ENCODE measurements at regions of chr9 and their contacts with region 1.

Region 1: GRCh38 chr9:4984621-4985385 is at the start of gene JAK2:
- DNase-seq: peak; percentile 91
- H3K4me3 Mint-ChIP-seq: no peak within 1 kb of the TSS
- H3K27ac Mint-ChIP-seq: peak within 1 kb of the TSS; percentile 96
- H3K4me1 Mint-ChIP-seq: peaks cover 45% of the 10 kb centered on the region
- H3K27me3 Mint-ChIP-seq: no peaks in the 10 kb centered on the region
- total RNA-seq, gene JAK2: 29.4 and 32.3 TPM in 2 replicates

Region 2: DNA sequence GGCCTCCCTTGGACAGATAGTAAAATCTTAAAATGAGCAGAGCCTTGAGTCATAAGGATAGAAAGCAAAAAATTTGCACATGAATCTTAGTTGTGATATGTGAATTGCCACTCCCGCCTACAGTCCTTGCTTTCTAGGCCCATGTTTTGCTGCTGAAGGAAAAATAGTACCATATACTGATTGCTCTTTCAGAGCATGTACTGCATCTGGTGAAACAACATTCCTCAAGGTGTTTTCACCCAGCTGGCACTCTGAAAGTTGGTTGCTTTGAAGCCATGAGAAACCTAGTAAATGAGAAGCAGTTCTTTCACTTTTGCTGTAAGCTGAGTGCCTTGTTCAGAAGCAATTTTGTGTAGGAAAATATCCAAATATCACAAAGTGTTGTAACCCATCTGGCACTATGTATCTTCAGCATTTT is 295.1 kb before region 1 on chr9:
- intact Hi-C with region 1: loop called (anchors 5 kb)
- DNase-seq: no peak
- H3K4me3 Mint-ChIP-seq: no peak overlapping the region
- H3K27ac Mint-ChIP-seq: peak overlapping the region; percentile 57
- H3K4me1 Mint-ChIP-seq: peaks cover 25% of the 10 kb centered on the region
- H3K27me3 Mint-ChIP-seq: no peaks in the 10 kb centered on the region

Region 3: GRCh38 chr9:4792572-4793458 is 192.0 kb before region 1 on chr9 and contains the start of gene RCL1:
- intact Hi-C with region 1: loop called (anchors 1 kb)
- DNase-seq: peak; percentile 97
- H3K4me3 Mint-ChIP-seq: peak within 1 kb of the TSS; percentile 93
- H3K27ac Mint-ChIP-seq: peak within 1 kb of the TSS; percentile 90
- H3K4me1 Mint-ChIP-seq: peaks cover 40% of the 10 kb centered on the region
- H3K27me3 Mint-ChIP-seq: peaks cover 2% of the 10 kb centered on the region
- total RNA-seq, gene RCL1: 34.5 and 36.3 TPM in 2 replicates

Region 4: DNA sequence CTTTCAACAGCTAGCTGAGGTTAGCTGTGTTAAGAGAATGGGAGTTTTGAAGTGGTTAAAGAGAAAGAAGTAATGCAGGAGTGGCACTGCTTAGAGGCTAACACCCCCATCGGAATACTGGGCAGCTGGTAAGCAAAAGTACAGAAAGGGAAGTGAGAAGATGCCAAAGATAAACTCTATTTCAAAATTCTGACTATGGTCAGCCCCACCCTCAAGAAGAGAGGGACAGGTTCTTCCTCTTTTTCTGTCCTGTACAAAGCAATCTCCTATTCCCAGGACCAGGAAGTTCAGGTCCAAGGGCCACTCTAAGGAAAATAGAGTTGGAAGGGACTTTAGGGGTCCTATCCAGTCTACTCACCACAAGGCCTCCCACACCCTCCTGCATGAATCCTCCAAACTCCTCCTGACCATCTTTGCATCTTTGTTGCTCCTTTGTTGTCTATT is 45.7 kb before region 1 on chr9:
- intact Hi-C with region 1: loop called (anchors 1 kb)
- DNase-seq: peak; percentile 39
- H3K4me3 Mint-ChIP-seq: peak overlapping the region; percentile 14
- H3K27ac Mint-ChIP-seq: peak overlapping the region; percentile 90
- H3K4me1 Mint-ChIP-seq: peaks cover 65% of the 10 kb centered on the region
- H3K27me3 Mint-ChIP-seq: no peaks in the 10 kb centered on the region

Region 5: DNA sequence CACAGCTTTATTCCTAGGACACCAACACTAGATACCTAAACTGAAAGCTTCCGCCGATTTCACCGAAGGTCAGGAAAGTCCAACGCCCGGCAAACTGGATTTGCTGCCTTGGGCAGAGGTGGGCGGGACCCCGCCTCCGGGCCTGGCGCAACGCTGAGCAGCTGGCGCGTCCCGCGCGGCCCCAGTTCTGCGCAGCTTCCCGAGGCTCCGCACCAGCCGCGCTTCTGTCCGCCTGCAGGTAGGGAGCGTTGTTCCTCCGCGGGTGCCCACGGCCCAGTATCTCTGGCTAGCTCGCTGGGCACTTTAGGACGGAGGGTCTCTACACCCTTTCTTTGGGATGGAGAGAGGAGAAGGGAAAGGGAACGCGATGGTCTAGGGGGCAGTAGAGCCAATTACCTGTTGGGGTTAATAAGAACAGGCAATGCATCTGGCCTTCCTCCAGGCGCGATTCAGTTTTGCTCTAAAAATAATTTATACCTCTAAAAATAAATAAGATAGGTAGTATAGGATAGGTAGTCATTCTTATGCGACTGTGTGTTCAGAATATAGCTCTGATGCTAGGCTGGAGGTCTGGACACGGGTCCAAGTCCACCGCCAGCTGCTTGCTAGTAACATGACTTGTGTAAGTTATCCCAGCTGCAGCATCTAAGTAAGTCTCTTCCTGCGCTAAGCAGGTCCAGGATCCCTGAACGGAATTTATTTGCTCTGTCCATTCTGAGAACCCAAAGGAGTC is 465.7 kb after region 1 on chr9 and contains the start of gene CD274:
- intact Hi-C with region 1: loop called (anchors 2 kb)
- DNase-seq: peak; percentile 77
- H3K4me3 Mint-ChIP-seq: peak within 1 kb of the TSS; percentile 97
- H3K27ac Mint-ChIP-seq: peak within 1 kb of the TSS; percentile 92
- H3K4me1 Mint-ChIP-seq: peaks cover 71% of the 10 kb centered on the region
- H3K27me3 Mint-ChIP-seq: no peaks in the 10 kb centered on the region
- total RNA-seq, gene CD274: 36.7 and 40.5 TPM in 2 replicates

Region 6: GRCh38 chr9:6008169-6008979 is 1023.6 kb after region 1 on chr9:
- intact Hi-C with region 1: loop called (anchors 10 kb)
- DNase-seq: peak; percentile 92
- H3K4me3 Mint-ChIP-seq: peak overlapping the region; percentile 74
- H3K27ac Mint-ChIP-seq: peak overlapping the region; percentile 84
- H3K4me1 Mint-ChIP-seq: peaks cover 53% of the 10 kb centered on the region
- H3K27me3 Mint-ChIP-seq: no peaks in the 10 kb centered on the region

Measured in activated T-helper 2 cell treated with anti-CD3 and anti-CD28 coated beads, Interferon-gamma antibody, Interleukin-2, Interleukin-4, amounts not matched to agents 10 μg/mL and 5 μg/mL and 100 μg/mL, durations not matched to agents 14 hours and 24 hours and 36 hours (primary cell).